ENCODE measurements at regions of chr16 and their contacts with region 1.

Region 1: DNA sequence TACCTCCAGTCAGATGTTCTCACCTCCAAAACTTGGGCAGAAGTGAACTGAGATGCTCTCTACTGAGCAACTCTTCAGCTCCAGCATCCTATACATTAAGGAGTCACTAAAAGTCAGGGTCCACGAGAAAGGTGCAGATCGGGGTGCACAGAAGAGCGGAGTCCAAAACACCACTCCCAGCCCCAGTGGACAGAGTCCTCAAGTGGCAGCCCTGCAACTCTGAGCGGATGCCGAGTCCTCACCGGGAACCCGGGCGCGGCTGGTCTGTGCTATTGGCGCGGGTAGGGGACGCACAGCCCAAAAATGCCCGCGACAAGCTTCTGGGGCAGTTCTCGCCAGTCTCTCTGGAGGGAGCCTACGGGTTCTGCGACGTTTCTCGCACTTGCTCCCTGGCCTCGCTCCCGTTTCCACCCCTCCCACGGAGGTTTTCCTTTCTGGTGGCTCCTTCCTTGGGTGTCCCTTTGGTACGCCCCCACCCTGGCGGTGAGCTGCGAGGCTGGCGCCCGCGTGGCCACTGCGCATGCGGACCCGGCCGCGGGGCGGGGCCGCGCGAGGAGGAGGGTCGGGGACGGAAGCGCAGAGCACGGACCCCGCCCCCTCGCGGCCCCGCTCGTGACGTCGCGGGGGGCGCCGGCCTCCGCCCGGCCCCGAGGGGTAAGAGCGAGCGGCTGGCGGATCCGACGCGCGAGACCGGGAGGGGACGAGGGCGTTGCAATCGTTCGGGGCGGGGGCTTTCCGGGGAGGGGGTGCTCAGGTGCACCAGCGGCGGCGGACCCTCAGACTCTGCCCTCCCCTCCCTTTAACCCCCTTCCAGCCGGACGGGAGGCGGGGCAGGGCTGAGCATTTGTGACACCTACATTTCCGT is at the start of gene TMEM219:
- DNase-seq: peak; percentile 99
- ATAC-seq: peak; percentile 96
- H3K4me3 Mint-ChIP-seq: peak within 1 kb of the TSS; percentile 81
- H3K27ac Mint-ChIP-seq: peak within 1 kb of the TSS; percentile 87
- H3K4me1 Mint-ChIP-seq: peaks cover 16% of the 10 kb centered on the region
- H3K27me3 Mint-ChIP-seq: no peaks in the 10 kb centered on the region
- total RNA-seq, gene TMEM219: 67.8 to 74.5 TPM

Region 2: GRCh38 chr16:29909391-29909790 is 52.3 kb before region 1 on chr16:
- POLR2A ChIA-PET with region 1: interaction called, 10 read pairs
- DNase-seq: no peak
- ATAC-seq: no peak
- H3K4me3 Mint-ChIP-seq: no peak overlapping the region
- H3K27ac Mint-ChIP-seq: no peak overlapping the region
- H3K4me1 Mint-ChIP-seq: peaks cover 2% of the 10 kb centered on the region
- H3K27me3 Mint-ChIP-seq: no peaks in the 10 kb centered on the region

Region 3: DNA sequence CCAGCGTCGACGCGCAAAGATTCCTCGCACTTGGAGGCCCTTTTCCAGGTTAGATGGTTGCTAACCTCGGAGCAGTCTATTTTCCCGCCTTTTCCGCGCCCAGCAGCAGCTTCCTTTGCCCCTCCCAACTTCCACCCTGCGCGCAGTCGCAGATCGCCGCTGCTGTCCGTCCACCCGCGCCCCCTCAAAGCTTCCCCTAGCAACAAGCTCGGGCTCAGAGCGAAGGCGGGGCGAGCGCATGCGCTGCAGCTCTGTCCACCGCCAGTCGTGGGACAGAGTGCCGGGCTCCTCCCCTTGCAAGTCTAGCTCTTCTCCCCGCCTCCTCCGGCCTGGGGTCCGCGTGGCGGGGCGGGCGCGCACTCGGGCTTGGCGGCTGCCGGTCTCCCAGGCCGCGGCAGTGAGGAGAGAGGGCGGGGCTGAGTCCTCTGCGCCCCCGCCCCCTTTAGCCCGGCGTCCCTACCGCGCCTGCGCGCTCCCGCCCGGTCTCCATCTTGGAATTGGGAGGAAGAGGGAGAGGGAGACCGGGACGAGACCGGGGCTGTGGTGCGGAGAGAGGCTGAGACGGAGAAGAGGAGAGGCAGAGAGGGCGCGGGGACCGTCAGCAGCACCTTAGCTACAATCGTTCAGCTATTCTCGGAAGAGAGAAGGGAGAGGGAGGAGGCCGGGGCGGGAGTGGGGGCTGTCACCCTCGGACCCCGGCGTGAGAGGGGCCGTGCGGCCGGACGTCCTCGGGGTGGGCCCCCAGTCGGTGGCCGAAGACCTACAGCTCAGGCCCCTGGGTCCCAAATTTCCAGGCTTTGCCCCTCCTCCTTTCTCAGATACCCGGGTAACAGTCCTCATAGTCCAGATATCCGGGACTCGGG is 11.9 kb after region 1 on chr16 and contains the start of gene TAOK2:
- POLR2A ChIA-PET with region 1: interaction called, 72 read pairs
- DNase-seq: peak; percentile 96
- ATAC-seq: peak; percentile 98
- H3K4me3 Mint-ChIP-seq: peak within 1 kb of the TSS; percentile 86
- H3K27ac Mint-ChIP-seq: peak within 1 kb of the TSS; percentile 96
- H3K4me1 Mint-ChIP-seq: peaks cover 36% of the 10 kb centered on the region
- H3K27me3 Mint-ChIP-seq: no peaks in the 10 kb centered on the region
- total RNA-seq, gene TAOK2: 51.6 to 53.4 TPM

Region 4: DNA sequence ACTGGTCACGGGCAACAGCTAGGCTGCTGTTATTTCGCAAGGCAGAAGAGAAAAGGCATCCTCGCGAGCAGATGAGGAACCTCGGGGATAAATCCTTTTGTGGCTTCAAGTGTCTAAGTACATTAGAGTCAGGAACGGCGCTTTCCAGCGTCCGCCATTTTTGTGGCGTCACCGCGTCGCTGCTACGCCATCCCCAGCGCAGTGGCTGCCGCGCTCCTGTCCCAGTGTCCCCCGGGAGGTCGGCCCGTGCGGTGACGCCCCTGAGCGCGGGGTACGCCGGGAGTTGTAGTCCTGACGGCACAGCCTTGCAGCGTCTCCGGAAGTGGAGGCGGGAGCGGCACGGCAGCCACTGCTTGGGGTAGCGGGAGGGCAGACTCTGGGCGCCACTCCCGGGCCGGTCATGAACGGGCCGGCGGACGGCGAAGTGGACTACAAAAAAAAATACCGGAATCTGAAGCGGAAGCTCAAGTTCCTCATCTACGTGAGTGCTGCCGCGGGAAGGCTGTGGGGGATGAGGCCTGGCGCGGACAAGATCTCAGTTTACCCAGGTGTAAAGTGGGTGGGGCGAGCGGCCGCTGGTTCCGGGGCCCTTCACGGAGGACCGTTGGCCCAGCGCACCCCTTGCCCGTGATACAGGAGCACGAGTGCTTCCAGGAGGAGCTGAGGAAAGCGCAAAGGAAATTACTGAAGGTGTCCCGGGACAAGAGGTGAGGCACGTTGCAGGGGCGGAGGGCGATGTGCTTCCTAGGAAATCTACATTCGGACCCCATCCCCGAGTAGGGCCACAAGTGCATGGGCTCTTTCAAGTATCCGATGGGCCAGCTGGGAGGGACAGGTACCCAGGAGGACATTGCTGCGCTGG is 34.4 kb after region 1 on chr16 and contains the start of gene INO80E:
- POLR2A ChIA-PET with region 1: interaction called, 28 read pairs
- DNase-seq: peak; percentile 99
- ATAC-seq: peak; percentile 95
- H3K4me3 Mint-ChIP-seq: peak within 1 kb of the TSS; percentile 98
- H3K27ac Mint-ChIP-seq: peak within 1 kb of the TSS; percentile 97
- H3K4me1 Mint-ChIP-seq: peaks cover 25% of the 10 kb centered on the region
- H3K27me3 Mint-ChIP-seq: no peaks in the 10 kb centered on the region
- total RNA-seq, gene INO80E: 113 to 118 TPM

Measured in activated naive CD8-positive, alpha-beta T cell treated with anti-CD3 and anti-CD28 coated beads, Interleukin-2, amount 10 ng/mL, durations not matched to agents 7 days and 5 days (primary cell).